Endothelial cell of umbilical vein (primary cell): ENCODE measurements at regions of chr11 and their contacts with region 1.

Region 1: DNA sequence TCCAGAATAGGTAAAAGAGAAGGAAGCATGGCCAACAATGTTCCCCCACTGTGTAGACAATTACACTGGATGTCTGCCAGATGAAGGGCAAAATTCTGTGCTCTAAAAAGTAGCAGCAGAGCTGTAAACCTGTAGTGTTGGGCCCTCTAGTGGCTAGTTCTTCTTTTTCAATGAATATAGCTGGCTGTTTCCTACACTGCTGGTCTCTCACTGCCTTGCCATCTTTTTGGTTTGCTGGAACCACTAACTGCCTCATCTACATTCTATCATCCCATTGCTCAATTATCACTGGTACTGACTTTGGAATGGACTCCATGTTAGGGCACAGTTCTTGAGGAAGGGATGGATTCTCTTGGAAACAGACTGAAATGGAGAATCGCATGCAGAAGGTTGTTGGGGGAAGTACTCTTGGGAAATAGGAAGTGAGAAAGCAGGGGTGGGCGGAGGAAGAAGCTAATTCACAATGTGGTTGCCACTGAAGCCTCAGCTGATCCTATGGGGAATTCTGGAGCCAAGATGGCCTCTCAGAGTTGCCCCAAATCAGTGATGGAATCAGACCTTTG is 17.9 kb downstream of the KCNE3 start:
- DNase-seq: peak; percentile 86
- H3K4me3 ChIP-seq: peak overlapping the region in 1 of 3 experiments; percentile 40
- H3K27ac ChIP-seq: no peak overlapping the region
- H3K4me1 ChIP-seq: peaks cover 11% of the 10 kb centered on the region
- H3K27me3 ChIP-seq: no peaks in the 10 kb centered on the region
- CTCF ChIP-seq: peak; percentile 65 to 71
- POLR2A ChIP-seq: no peak

Region 2: GRCh38 chr11:74094400-74094799 is 355.1 kb before region 1 on chr11:
- CTCF ChIA-PET with region 1: no interaction called
- POLR2A ChIA-PET with region 1: no interaction called
- dilution Hi-C with region 1: no loop called
- intact Hi-C with region 1: no loop called
- DNase-seq: no peak
- H3K4me3 ChIP-seq: no peak overlapping the region
- H3K27ac ChIP-seq: no peak overlapping the region
- H3K4me1 ChIP-seq: no peaks in the 10 kb centered on the region
- H3K27me3 ChIP-seq: no peaks in the 10 kb centered on the region
- CTCF ChIP-seq: no peak
- POLR2A ChIP-seq: no peak

Region 3: DNA sequence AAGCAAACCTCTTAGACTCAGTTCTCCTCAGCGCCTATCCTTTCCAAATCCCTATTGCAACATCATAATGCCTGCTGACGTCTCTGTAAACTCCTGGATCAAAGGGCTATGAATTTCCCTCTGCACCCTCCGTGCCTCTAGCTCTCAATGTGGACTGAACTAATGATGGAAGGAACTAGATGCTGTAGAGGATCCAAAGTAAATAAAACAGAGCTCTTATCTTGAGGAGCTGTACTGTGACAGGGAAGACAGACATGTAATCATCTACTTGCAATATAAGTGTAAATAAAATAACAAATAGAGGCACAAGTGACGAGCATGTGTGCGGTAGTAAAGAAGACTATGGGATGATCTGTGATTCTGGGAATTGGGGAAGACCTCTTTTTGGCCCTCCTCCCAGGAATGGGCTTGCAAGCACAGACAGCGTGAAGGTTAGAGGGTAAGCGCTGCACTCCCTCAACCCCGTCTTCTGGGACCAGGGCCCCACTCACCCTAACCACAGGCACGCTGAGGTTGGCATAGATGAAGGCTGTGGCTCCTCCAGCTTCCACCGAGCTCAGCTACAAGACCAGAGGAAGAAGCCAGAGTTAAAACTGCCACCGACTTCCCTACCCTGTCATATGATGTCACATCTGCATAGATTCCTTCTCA is 180.2 kb before region 1 on chr11:
- CTCF ChIA-PET with region 1: interaction called, 12 read pairs
- POLR2A ChIA-PET with region 1: no interaction called
- dilution Hi-C with region 1: no loop called
- intact Hi-C with region 1: no loop called
- DNase-seq: no peak
- H3K4me3 ChIP-seq: no peak overlapping the region
- H3K27ac ChIP-seq: no peak overlapping the region
- H3K4me1 ChIP-seq: no peaks in the 10 kb centered on the region
- H3K27me3 ChIP-seq: no peaks in the 10 kb centered on the region
- CTCF ChIP-seq: no peak
- POLR2A ChIP-seq: no peak

Region 4: GRCh38 chr11:74398244-74399159 is 50.9 kb before region 1 on chr11 and contains the start of gene PGM2L1:
- CTCF ChIA-PET with region 1: interaction called, 30 read pairs
- POLR2A ChIA-PET with region 1: interaction called, 5 read pairs
- dilution Hi-C with region 1: no loop called
- intact Hi-C with region 1: loop called (anchors 1 kb)
- DNase-seq: peak; percentile 95
- H3K4me3 ChIP-seq: peak within 1 kb of the TSS; percentile 36 to 96 (median 73)
- H3K27ac ChIP-seq: peak within 1 kb of the TSS; percentile 67
- H3K4me1 ChIP-seq: peaks cover 12% of the 10 kb centered on the region
- H3K27me3 ChIP-seq: no peaks in the 10 kb centered on the region
- CTCF ChIP-seq: no peak
- POLR2A ChIP-seq: peak; percentile 87
- total RNA-seq, gene PGM2L1: 24.7 and 31.4 TPM in 2 replicates

Region 5: GRCh38 chr11:74462009-74462408 is 12.6 kb after region 1 on chr11:
- CTCF ChIA-PET with region 1: interaction called, 38 read pairs
- POLR2A ChIA-PET with region 1: no interaction called
- dilution Hi-C with region 1: no loop called
- intact Hi-C with region 1: no loop called
- DNase-seq: no peak
- H3K4me3 ChIP-seq: no peak overlapping the region
- H3K27ac ChIP-seq: no peak overlapping the region
- H3K4me1 ChIP-seq: peaks cover 8% of the 10 kb centered on the region
- H3K27me3 ChIP-seq: peaks cover 14 to 23% of the 10 kb centered on the region in 2 experiments
- CTCF ChIP-seq: no peak
- POLR2A ChIP-seq: no peak

Region 6: GRCh38 chr11:74559110-74559933 is 109.9 kb after region 1 on chr11:
- CTCF ChIA-PET with region 1: interaction called, 595 read pairs
- POLR2A ChIA-PET with region 1: no interaction called
- dilution Hi-C with region 1: no loop called
- intact Hi-C with region 1: no loop called
- DNase-seq: peak; percentile 93
- H3K4me3 ChIP-seq: no peak overlapping the region
- H3K27ac ChIP-seq: peak overlapping the region; percentile 18
- H3K4me1 ChIP-seq: peaks cover 16% of the 10 kb centered on the region
- H3K27me3 ChIP-seq: no peaks in the 10 kb centered on the region
- CTCF ChIP-seq: no peak
- POLR2A ChIP-seq: no peak

Region 7: DNA sequence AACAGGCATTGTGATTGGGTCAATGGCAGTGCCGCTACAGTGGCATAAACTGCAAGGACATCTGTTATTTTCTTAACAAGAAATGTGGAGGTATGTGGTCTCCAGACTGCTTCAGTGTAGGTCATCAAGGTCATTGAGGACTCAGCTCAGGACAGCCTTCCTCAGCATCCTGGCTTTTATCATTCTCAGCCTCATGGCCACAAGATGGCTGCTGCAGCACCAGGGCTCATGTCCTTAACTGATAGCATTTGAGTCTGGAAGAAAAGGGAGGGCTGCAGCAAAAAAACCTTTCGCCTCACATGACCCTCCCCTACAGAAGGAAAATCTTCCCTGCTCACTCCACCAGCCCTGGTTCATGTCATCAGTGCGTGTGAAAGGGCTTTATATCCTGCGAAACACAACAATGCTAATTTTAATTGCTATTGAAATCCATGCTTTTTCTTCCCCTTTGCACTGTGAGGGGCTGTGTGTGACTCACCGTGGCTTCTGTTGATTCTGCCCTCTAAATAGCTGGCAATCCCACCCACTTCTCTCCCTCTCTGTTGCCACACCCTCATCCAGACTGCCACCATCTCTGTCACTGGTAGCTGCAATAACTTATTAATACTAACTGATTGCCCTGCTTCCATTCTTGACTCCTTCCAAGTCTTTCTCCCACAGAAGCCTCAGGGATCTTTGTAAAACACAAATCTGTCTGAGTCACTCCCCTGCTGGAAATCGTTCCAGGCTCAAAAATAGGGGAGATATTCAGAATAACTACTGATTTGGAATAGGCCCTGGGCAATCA is 238.0 kb after region 1 on chr11:
- CTCF ChIA-PET with region 1: no interaction called
- POLR2A ChIA-PET with region 1: no interaction called
- dilution Hi-C with region 1: no loop called
- intact Hi-C with region 1: no loop called
- DNase-seq: no peak
- H3K4me3 ChIP-seq: no peak overlapping the region
- H3K27ac ChIP-seq: no peak overlapping the region
- H3K4me1 ChIP-seq: peaks cover 4% of the 10 kb centered on the region
- H3K27me3 ChIP-seq: no peaks in the 10 kb centered on the region
- CTCF ChIP-seq: no peak
- POLR2A ChIP-seq: no peak

Region 8: DNA sequence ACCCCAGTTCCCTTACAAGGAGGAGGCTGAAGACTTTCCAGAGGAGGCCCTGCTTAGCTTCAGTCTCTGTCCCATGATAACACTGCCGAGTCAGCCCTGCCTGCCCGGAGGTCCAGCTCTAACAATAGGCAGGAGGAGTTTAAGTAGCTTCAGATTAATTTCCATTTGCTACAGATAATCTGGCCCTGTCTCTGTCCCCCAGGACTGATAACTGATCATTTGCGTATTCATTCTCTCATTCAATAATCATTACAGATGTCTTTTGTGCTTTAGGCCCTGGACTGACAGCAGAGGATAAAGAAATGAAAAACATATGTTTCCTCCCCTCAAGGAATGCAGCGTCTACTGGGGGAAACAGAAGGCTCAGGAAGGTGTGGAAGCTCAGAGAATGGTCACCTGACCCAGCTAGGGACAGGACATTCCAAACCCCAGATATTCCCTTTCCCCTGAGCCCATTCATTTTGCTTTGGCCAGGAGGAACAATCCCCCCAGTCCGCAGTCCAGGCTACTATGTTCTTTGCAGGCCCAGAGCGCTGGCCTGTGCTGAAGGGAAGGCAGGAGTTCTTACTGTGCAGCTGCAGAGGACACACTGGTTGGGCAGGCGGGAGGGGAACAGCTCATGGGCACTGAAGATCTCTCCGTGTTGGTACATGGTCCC is 261.0 kb after region 1 on chr11:
- CTCF ChIA-PET with region 1: no interaction called
- POLR2A ChIA-PET with region 1: no interaction called
- dilution Hi-C with region 1: no loop called
- intact Hi-C with region 1: no loop called
- DNase-seq: peak; percentile 26
- H3K4me3 ChIP-seq: no peak overlapping the region
- H3K27ac ChIP-seq: no peak overlapping the region
- H3K4me1 ChIP-seq: no peaks in the 10 kb centered on the region
- H3K27me3 ChIP-seq: peaks cover 0 to 2% of the 10 kb centered on the region in 2 experiments
- CTCF ChIP-seq: no peak
- POLR2A ChIP-seq: no peak

Region 9: GRCh38 chr11:74870485-74870884 is 421.0 kb after region 1 on chr11:
- CTCF ChIA-PET with region 1: interaction called, 21 read pairs
- POLR2A ChIA-PET with region 1: no interaction called
- dilution Hi-C with region 1: no loop called
- intact Hi-C with region 1: no loop called
- DNase-seq: peak; percentile 49
- H3K4me3 ChIP-seq: no peak overlapping the region
- H3K27ac ChIP-seq: no peak overlapping the region
- H3K4me1 ChIP-seq: no peaks in the 10 kb centered on the region
- H3K27me3 ChIP-seq: no peaks in the 10 kb centered on the region
- CTCF ChIP-seq: peak; percentile 39 to 45
- POLR2A ChIP-seq: no peak